PC-9 (cell line): ENCODE measurements at regions of chr18 and their contacts with region 1.

Region 1: DNA sequence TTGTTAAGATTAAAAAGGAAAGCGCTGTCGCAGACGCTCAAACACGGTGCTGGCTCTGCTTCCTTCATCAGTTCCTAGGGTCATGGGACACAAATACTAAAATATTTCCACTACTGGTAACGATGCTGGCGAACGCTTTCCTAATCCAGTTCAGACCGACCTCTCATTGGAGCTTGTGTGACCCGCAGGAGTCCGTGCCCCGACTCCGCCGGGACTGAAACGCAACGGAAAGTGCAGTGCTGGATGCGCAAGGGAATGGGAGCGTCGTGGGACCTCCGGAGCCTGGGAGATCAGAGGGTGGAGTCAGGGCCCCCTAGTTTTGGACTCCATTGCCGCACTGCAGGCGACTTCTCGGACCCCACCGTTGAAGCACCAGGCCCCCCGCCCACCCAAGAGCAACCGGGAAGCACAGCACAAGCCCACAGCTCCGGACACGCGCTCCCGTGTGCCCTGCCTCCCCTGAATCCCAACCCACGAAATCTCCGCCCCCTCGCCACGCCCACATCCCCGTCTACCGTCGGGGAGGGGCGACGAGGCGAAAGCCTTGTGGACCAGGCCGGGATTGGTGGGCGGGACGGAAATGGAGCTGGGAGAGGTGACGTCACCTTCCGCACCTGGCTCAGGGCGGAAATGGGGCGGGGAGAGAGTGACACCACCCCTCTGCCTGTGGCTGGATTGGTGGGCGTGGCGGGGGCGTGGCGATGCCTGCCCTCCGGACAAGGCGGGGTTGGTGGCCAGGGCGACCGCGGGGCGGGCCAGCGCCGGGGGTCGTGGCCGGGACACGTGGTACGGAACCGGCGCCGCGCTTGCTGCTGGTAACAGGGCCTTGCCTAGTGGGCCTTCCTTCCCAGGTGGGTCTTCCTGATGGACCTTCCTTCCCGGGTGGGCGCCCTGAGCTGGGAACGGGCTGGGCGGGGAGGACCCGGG is at the start of gene CNDP2:
- DNase-seq: peak; percentile 96 to 99
- H3K4me3 ChIP-seq: peak within 1 kb of the TSS; percentile 76
- H3K27ac ChIP-seq: peak within 1 kb of the TSS; percentile 58
- H3K4me1 ChIP-seq: peaks cover 8% of the 10 kb centered on the region
- H3K27me3 ChIP-seq: peaks cover 21% of the 10 kb centered on the region
- CTCF ChIP-seq: no peak
- total RNA-seq, gene CNDP2: 161 and 183 TPM in 2 replicates

Region 2: GRCh38 chr18:74147779-74148542 is 347.9 kb before region 1 on chr18 and contains the starts of genes FBXO15 and TIMM21:
- CTCF ChIA-PET with region 1: no interaction called
- POLR2A ChIA-PET with region 1: no interaction called
- intact Hi-C with region 1: loop called (anchors 2 kb)
- DNase-seq: peak; percentile 90 to 93
- H3K4me3 ChIP-seq: peak within 1 kb of the TSS; percentile 80
- H3K27ac ChIP-seq: peak within 1 kb of the TSS; percentile 14; the same call in 1 of the 2 replicates
- H3K4me1 ChIP-seq: peaks cover 16% of the 10 kb centered on the region
- H3K27me3 ChIP-seq: no peaks in the 10 kb centered on the region
- CTCF ChIP-seq: no peak
- total RNA-seq, gene FBXO15: 2.2 and 3.9 TPM in 2 replicates
- total RNA-seq, gene TIMM21: 17.9 and 32.6 TPM in 2 replicates

Region 3: GRCh38 chr18:74291771-74292540 is 203.9 kb before region 1 on chr18 and contains the start of gene CYB5A:
- CTCF ChIA-PET with region 1: no interaction called
- POLR2A ChIA-PET with region 1: no interaction called
- intact Hi-C with region 1: loop called (anchors 5 kb)
- DNase-seq: peak; percentile 88 to 98
- H3K4me3 ChIP-seq: peak within 1 kb of the TSS; percentile 81
- H3K27ac ChIP-seq: 0 out of 2 replicates have a peak within 1 kb of the TSS, but pooled peaks have one; percentile 13
- H3K4me1 ChIP-seq: peaks cover 45% of the 10 kb centered on the region
- H3K27me3 ChIP-seq: no peaks in the 10 kb centered on the region
- CTCF ChIP-seq: peak; percentile 43; the same call in 1 of the 2 replicates
- total RNA-seq, gene CYB5A: 105 and 109 TPM in 2 replicates

Region 4: GRCh38 chr18:74353169-74353775 is 142.6 kb before region 1 on chr18:
- CTCF ChIA-PET with region 1: no interaction called
- POLR2A ChIA-PET with region 1: no interaction called
- intact Hi-C with region 1: loop called (anchors 1 kb)
- DNase-seq: peak; percentile 27 to 39
- H3K4me3 ChIP-seq: no peak overlapping the region
- H3K27ac ChIP-seq: no peak overlapping the region
- H3K4me1 ChIP-seq: no peaks in the 10 kb centered on the region
- H3K27me3 ChIP-seq: peaks cover 41% of the 10 kb centered on the region
- CTCF ChIP-seq: peak; percentile 75

Region 5: GRCh38 chr18:74459889-74460288 is 36.0 kb before region 1 on chr18:
- CTCF ChIA-PET with region 1: no interaction called
- POLR2A ChIA-PET with region 1: no interaction called
- intact Hi-C with region 1: no loop called
- DNase-seq: no peak
- H3K4me3 ChIP-seq: no peak overlapping the region
- H3K27ac ChIP-seq: no peak overlapping the region
- H3K4me1 ChIP-seq: no peaks in the 10 kb centered on the region
- H3K27me3 ChIP-seq: peaks cover 75% of the 10 kb centered on the region
- CTCF ChIP-seq: no peak; the same call in 1 of the 2 replicates

Region 6: GRCh38 chr18:74541703-74542555 is 46.1 kb after region 1 on chr18:
- CTCF ChIA-PET with region 1: no interaction called
- POLR2A ChIA-PET with region 1: no interaction called
- intact Hi-C with region 1: loop called (anchors 2 kb)
- DNase-seq: peak; percentile 77 to 96
- H3K4me3 ChIP-seq: peak overlapping the region; percentile 17; the same call in 1 of the 2 replicates
- H3K27ac ChIP-seq: 0 out of 2 replicates have a peak overlapping the region, but pooled peaks have one; percentile 12
- H3K4me1 ChIP-seq: peaks cover 23% of the 10 kb centered on the region
- H3K27me3 ChIP-seq: peaks cover 7% of the 10 kb centered on the region
- CTCF ChIP-seq: no peak

Region 7: GRCh38 chr18:74597662-74598349 is 102.0 kb after region 1 on chr18 and contains the start of gene ZNF407:
- CTCF ChIA-PET with region 1: no interaction called
- POLR2A ChIA-PET with region 1: interaction called, 3 read pairs
- intact Hi-C with region 1: loop called (anchors 1 kb)
- DNase-seq: peak; percentile 81 to 85
- H3K4me3 ChIP-seq: peak within 1 kb of the TSS; percentile 88
- H3K27ac ChIP-seq: peak within 1 kb of the TSS; percentile 81
- H3K4me1 ChIP-seq: peaks cover 25% of the 10 kb centered on the region
- H3K27me3 ChIP-seq: no peaks in the 10 kb centered on the region
- CTCF ChIP-seq: no peak
- total RNA-seq, gene ZNF407: 8.7 and 13.4 TPM in 2 replicates